ENCODE measurements at regions of chr3 and their contacts with region 1.

Region 1: DNA sequence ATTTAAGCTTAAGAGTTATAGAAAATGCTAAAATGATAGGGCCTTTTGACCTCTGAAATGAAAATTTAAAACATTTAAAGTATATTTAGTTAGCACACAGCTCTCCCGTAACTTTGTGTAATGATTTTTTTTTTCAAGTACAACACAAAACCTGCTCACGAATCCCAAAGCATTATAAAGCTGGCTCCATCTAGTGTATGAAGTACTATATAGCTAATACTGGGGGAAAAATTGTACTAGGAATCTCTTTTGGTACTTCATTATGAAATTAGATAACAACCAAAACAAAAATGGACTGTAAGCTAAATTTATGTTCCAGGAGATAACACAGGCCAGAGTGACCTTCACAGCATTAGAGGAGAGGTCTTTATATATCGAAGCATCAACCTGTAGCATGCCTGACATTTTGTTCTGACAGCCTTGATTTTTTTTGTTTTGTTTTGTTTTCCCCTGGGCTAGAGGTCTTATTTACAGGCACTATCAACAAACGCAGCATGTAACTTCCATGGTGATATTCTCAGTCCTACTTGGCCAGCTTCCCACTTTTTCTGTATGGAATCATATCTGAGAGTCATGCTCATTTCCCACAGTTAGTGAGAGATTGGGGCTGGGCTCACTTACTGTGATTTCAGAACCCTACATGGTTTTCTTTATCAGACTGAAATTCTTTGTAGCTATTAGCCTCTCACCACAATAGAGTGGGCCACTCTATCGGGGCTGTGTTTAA is 116.3 kb downstream of the MITF start:
- DNase-seq: peak; percentile 85
- H3K4me3 ChIP-seq: no peak overlapping the region
- H3K27ac ChIP-seq: no peak overlapping the region
- H3K4me1 ChIP-seq: peaks cover 20% of the 10 kb centered on the region
- H3K27me3 ChIP-seq: no peaks in the 10 kb centered on the region
- CTCF ChIP-seq: peak; percentile 24 to 32
- POLR2A ChIP-seq: no peak

Region 2: GRCh38 chr3:69691860-69692259 is 163.7 kb before region 1 on chr3:
- CTCF ChIA-PET with region 1: interaction called, 134 read pairs
- POLR2A ChIA-PET with region 1: no interaction called
- dilution Hi-C with region 1: no loop called
- intact Hi-C with region 1: loop called (anchors 1 kb)
- DNase-seq: no peak
- H3K4me3 ChIP-seq: no peak overlapping the region
- H3K27ac ChIP-seq: no peak overlapping the region
- H3K4me1 ChIP-seq: no peaks in the 10 kb centered on the region
- H3K27me3 ChIP-seq: peaks cover 6 to 10% of the 10 kb centered on the region in 2 experiments
- CTCF ChIP-seq: no peak
- POLR2A ChIP-seq: no peak

Region 3: GRCh38 chr3:69739204-69740102 is 116.1 kb before region 1 on chr3 and contains the start of gene MITF:
- CTCF ChIA-PET with region 1: interaction called, 16 read pairs
- POLR2A ChIA-PET with region 1: interaction called, 4 read pairs
- dilution Hi-C with region 1: no loop called
- intact Hi-C with region 1: loop called (anchors 1 kb)
- DNase-seq: peak; percentile 94
- H3K4me3 ChIP-seq: peak within 1 kb of the TSS; percentile 63 to 87 (median 74)
- H3K27ac ChIP-seq: no peak within 1 kb of the TSS
- H3K4me1 ChIP-seq: peaks cover 16% of the 10 kb centered on the region
- H3K27me3 ChIP-seq: peaks cover 0 to 6% of the 10 kb centered on the region in 2 experiments
- CTCF ChIP-seq: no peak
- POLR2A ChIP-seq: peak; percentile 30
- total RNA-seq, gene MITF: 2.5 and 3.9 TPM in 2 replicates

Region 4: GRCh38 chr3:69770219-69770618 is 85.4 kb before region 1 on chr3:
- CTCF ChIA-PET with region 1: interaction called, 3 read pairs
- POLR2A ChIA-PET with region 1: no interaction called
- dilution Hi-C with region 1: no loop called
- intact Hi-C with region 1: loop called (anchors 1 kb)
- DNase-seq: peak; percentile 77
- H3K4me3 ChIP-seq: no peak overlapping the region
- H3K27ac ChIP-seq: peak overlapping the region; percentile 66
- H3K4me1 ChIP-seq: peaks cover 22% of the 10 kb centered on the region
- H3K27me3 ChIP-seq: no peaks in the 10 kb centered on the region
- CTCF ChIP-seq: no peak
- POLR2A ChIP-seq: no peak

Region 5: GRCh38 chr3:69806735-69807438 is 48.7 kb before region 1 on chr3:
- CTCF ChIA-PET with region 1: interaction called, 14 read pairs
- POLR2A ChIA-PET with region 1: no interaction called
- dilution Hi-C with region 1: no loop called
- intact Hi-C with region 1: loop called (anchors 2 kb)
- DNase-seq: peak; percentile 91
- H3K4me3 ChIP-seq: no peak overlapping the region
- H3K27ac ChIP-seq: peak overlapping the region; percentile 91
- H3K4me1 ChIP-seq: peaks cover 38% of the 10 kb centered on the region
- H3K27me3 ChIP-seq: no peaks in the 10 kb centered on the region
- CTCF ChIP-seq: no peak
- POLR2A ChIP-seq: no peak

Region 6: GRCh38 chr3:69865920-69866679 is 10.5 kb after region 1 on chr3:
- CTCF ChIA-PET with region 1: interaction called, 15 read pairs
- POLR2A ChIA-PET with region 1: no interaction called
- dilution Hi-C with region 1: no loop called
- intact Hi-C with region 1: no loop called
- DNase-seq: no peak
- H3K4me3 ChIP-seq: no peak overlapping the region
- H3K27ac ChIP-seq: no peak overlapping the region
- H3K4me1 ChIP-seq: no peaks in the 10 kb centered on the region
- H3K27me3 ChIP-seq: no peaks in the 10 kb centered on the region
- CTCF ChIP-seq: no peak
- POLR2A ChIP-seq: no peak

Region 7: GRCh38 chr3:69948246-69948862 is 92.8 kb after region 1 on chr3:
- CTCF ChIA-PET with region 1: interaction called, 6 read pairs
- POLR2A ChIA-PET with region 1: no interaction called
- dilution Hi-C with region 1: no loop called
- intact Hi-C with region 1: loop called (anchors 2 kb)
- DNase-seq: peak; percentile 60
- H3K4me3 ChIP-seq: no peak overlapping the region
- H3K27ac ChIP-seq: no peak overlapping the region
- H3K4me1 ChIP-seq: no peaks in the 10 kb centered on the region
- H3K27me3 ChIP-seq: no peaks in the 10 kb centered on the region
- CTCF ChIP-seq: peak; percentile 30 to 39
- POLR2A ChIP-seq: no peak

Measured in endothelial cell of umbilical vein (primary cell).